WTC11 (cell line): ENCODE measurements at regions of chr10 and their contacts with region 1.

Region 1: DNA sequence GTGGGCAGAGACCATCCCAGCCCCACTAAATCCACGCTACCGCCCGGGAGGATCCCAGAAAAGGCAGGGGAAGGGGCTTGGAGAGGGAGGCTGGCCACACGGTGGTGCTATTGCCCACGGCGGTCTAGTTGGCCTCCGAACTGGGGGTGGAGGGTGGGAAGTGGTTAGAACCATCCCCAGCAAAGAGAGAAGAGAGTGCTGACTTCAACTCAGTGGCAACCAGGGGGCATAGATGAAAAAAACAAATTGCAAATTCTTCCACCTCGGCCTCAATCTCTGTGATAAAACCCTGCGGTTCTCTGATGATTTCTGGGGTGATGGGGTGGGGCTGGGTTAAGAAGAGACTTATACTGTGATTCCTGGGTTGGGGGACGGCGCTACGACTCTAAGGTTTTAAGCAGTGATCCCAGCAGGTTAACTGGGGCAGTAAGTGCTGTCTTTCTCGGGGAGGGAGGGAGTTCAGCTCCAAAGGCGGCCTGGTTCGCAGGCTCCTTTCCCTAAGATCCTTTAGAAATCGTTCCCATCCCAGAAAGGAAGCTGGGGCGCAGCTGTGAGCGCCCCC is 154.5 kb upstream of the LYZL2 start:
- DNase-seq: peak; percentile 92
- ATAC-seq: peak; percentile 49
- H3K4me3 Mint-ChIP-seq: peak overlapping the region; percentile 77
- H3K27ac Mint-ChIP-seq: peak overlapping the region; percentile 84
- H3K4me1 Mint-ChIP-seq: peaks cover 14% of the 10 kb centered on the region
- H3K27me3 Mint-ChIP-seq: peaks cover 34% of the 10 kb centered on the region
- CTCF ChIP-seq: peak; percentile 63

Region 2: DNA sequence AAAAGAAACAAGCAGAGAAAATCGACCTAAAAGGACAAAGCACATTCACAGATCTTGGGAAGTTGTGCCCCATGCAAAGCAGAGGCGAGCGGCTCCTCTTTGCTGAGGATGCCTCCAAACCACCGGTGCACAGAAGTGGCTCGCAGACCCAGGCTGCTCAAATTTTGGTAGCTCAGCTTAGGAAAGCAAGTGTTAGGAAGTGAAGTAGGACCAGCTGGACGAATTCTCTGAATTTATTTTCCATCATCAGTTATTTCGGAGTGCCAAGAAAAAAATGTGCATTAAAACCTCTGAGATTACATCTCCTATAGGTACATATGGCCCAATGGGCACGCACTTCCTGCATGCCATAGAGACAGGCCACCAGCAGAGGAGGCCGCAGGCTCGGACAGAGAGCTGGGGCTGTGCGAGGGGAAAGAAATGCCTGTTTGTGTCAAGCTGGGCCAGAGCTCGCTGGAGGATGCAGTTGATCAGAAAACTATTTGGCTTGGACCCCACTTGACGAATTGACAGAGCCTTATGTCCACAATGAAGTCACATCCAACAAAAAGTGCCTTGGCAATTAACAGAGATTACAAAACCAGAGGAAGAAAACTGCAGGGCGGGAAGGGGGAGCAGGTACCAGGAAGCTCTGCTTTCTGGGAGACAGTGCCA is 32.2 kb before region 1 on chr10:
- CTCF ChIA-PET with region 1: interaction called, 31 read pairs
- POLR2A ChIA-PET with region 1: interaction called, 3 read pairs
- DNase-seq: peak; percentile 80
- ATAC-seq: peak; percentile 98
- H3K4me3 Mint-ChIP-seq: no peak overlapping the region
- H3K27ac Mint-ChIP-seq: no peak overlapping the region
- H3K4me1 Mint-ChIP-seq: peaks cover 5% of the 10 kb centered on the region
- H3K27me3 Mint-ChIP-seq: no peaks in the 10 kb centered on the region; the same call in none of the 2 replicates
- CTCF ChIP-seq: peak; percentile 67

Region 3: GRCh38 chr10:31083765-31084184 is 299.8 kb after region 1 on chr10:
- CTCF ChIA-PET with region 1: interaction called, 21 read pairs
- POLR2A ChIA-PET with region 1: no interaction called
- DNase-seq: peak; percentile 58
- ATAC-seq: peak; percentile 88
- H3K4me3 Mint-ChIP-seq: no peak overlapping the region
- H3K27ac Mint-ChIP-seq: no peak overlapping the region
- H3K4me1 Mint-ChIP-seq: peaks cover 5% of the 10 kb centered on the region
- H3K27me3 Mint-ChIP-seq: no peaks in the 10 kb centered on the region
- CTCF ChIP-seq: no peak

Region 4: DNA sequence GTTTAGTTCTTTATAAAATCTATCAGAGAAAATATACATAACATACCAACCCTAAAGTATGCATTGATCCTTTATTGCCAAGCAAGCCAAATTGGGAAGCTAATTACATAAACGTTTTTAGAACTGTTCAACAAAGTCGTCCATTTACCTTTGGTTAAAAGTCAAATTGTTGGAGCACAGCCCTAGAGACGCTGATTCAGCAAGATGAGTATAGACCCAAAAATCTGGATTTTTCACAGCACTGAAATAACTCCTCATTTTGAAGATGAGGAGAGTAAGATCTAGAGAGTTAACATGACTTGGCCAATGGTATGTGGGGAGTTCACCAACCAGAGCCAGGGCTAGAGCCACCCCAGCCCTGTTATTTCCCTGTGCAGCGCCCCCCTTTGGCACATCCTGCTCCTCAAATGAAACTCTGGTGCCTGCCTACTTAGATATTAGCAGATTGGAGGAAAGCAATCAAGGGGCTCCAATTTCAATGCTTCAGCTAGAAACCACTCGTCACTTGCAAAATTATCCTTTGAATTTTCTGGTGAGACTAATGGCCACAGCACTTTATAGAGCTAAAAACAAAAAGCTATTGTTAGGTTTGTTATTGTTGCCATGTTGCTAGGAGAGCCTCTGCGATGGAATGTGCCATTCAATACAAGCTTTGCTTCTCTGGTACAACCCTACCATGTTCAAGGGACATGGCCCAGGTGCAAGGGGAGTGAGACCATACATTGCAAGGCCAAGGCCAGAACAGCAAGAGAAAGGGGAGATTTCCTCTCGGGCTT is 402.4 kb after region 1 on chr10:
- CTCF ChIA-PET with region 1: interaction called, 12 read pairs
- POLR2A ChIA-PET with region 1: no interaction called
- DNase-seq: peak; percentile 52
- ATAC-seq: peak; percentile 97
- H3K4me3 Mint-ChIP-seq: no peak overlapping the region
- H3K27ac Mint-ChIP-seq: no peak overlapping the region
- H3K4me1 Mint-ChIP-seq: peaks cover 5% of the 10 kb centered on the region
- H3K27me3 Mint-ChIP-seq: no peaks in the 10 kb centered on the region
- CTCF ChIP-seq: no peak

Region 5: DNA sequence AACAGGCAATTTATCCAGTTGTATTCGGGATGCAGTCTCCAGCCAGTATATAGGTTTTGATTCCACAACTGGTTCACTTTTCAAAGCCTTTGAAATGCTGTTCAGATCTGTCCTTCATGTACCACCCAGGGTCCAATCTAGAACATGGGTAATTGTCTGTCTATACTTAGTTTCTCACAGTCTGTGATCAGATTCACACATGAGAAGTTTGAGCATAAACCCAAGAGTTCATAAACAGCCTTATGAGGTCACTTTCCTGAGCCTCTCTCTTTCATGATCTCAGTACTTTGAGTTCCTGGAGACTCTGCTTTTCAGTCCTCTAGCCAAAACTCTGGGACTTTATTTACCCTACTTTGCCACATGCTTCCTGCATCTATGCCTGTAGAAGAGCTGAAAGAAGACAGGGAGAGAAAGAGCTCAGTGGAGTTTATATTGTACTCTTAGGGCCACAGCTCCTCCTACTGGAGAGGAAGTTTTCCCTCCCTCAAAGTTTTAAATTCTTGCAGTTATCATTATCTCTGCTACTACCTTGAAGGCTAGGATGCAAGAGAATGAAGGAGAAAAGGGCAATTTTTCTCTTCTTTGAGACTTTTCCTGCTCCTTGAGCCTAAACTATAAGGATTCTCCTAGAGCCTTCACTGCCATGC is 707.0 kb after region 1 on chr10:
- CTCF ChIA-PET with region 1: interaction called, 32 read pairs
- POLR2A ChIA-PET with region 1: interaction called, 3 read pairs
- DNase-seq: no peak
- ATAC-seq: peak; percentile 76
- H3K4me3 Mint-ChIP-seq: no peak overlapping the region
- H3K27ac Mint-ChIP-seq: no peak overlapping the region
- H3K4me1 Mint-ChIP-seq: peaks cover 6% of the 10 kb centered on the region
- H3K27me3 Mint-ChIP-seq: no peaks in the 10 kb centered on the region; the same call in 1 of the 2 replicates
- CTCF ChIP-seq: peak; percentile 36; the same call in 1 of the 2 replicates